GM18951 (cell line): ENCODE measurements at regions of chr13 and their contacts with region 1.

Region 1: GRCh38 chr13:29508130-29508875 is 87.2 kb downstream of the SLC7A1 start:
- POLR2A ChIP-seq: no peak

Region 2: GRCh38 chr13:29239653-29240525 is 268.4 kb before region 1 on chr13:
- in situ Hi-C with region 1: no loop called
- POLR2A ChIP-seq: no peak

Region 3: GRCh38 chr13:29379281-29379680 is 129.0 kb before region 1 on chr13:
- in situ Hi-C with region 1: no loop called
- POLR2A ChIP-seq: no peak

Region 4: GRCh38 chr13:29707876-29708543 is 199.7 kb after region 1 on chr13:
- in situ Hi-C with region 1: loop called (anchors 25 kb)
- POLR2A ChIP-seq: no peak

Region 5: GRCh38 chr13:30088312-30088855 is 580.1 kb after region 1 on chr13:
- in situ Hi-C with region 1: loop called (anchors 25 kb)
- POLR2A ChIP-seq: no peak